Activated CD4-positive, alpha-beta memory T cell treated with anti-CD3 and anti-CD28 coated beads for 36 hours (primary cell): ENCODE measurements at regions of chr10 and their contacts with region 1.

Region 1: GRCh38 chr10:101782811-101783735 is at the start of gene NPM3:
- DNase-seq: peak; percentile 92
- H3K4me3 Mint-ChIP-seq: peak within 1 kb of the TSS; percentile 98
- H3K27ac Mint-ChIP-seq: peak within 1 kb of the TSS; percentile 83
- H3K4me1 Mint-ChIP-seq: peaks cover 67% of the 10 kb centered on the region
- H3K27me3 Mint-ChIP-seq: peaks cover 10% of the 10 kb centered on the region
- total RNA-seq, gene NPM3: 168 to 172 TPM

Region 2: GRCh38 chr10:101228153-101228973 is 554.7 kb before region 1 on chr10:
- CTCF ChIA-PET with region 1: no interaction called
- POLR2A ChIA-PET with region 1: no interaction called
- intact Hi-C with region 1: loop called (anchors 5 kb)
- DNase-seq: no peak
- H3K4me3 Mint-ChIP-seq: peak overlapping the region; percentile 3
- H3K27ac Mint-ChIP-seq: no peak overlapping the region
- H3K4me1 Mint-ChIP-seq: peaks cover 35% of the 10 kb centered on the region
- H3K27me3 Mint-ChIP-seq: peaks cover 68% of the 10 kb centered on the region

Region 3: DNA sequence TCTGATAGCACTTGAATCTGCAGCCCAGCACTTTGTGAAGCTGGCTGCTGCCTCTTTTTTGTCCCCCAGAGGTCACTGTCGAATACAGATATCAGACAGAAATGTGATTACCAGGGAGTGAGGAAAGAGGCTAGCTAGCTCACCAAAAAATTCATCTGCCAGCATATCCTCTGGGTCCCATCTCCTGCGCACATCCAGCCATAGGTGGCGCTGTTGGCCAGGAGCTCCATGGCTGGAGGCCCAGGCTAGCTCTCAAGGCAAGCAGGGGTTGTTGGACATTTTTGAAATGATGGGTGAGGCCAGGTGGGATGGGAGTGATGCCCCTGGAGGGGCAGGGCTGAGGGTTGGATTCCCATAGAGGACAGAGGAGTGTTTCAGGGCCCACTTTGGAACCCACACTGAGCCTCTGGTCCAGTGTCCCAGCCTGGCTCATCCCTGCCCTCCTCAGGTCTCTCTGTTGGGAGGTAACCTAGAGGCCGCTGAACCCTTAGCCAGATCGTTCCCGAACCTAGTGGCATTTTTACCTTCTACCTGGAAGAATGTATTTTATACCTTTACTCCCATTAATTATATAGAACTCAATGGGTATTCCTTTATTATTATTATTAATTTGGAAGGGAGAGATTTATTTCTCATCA is 180.2 kb before region 1 on chr10:
- CTCF ChIA-PET with region 1: interaction called, 197 read pairs
- POLR2A ChIA-PET with region 1: interaction called, 6 read pairs
- intact Hi-C with region 1: loop called (anchors 1 kb)
- DNase-seq: peak; percentile 86
- H3K4me3 Mint-ChIP-seq: no peak overlapping the region
- H3K27ac Mint-ChIP-seq: no peak overlapping the region
- H3K4me1 Mint-ChIP-seq: no peaks in the 10 kb centered on the region
- H3K27me3 Mint-ChIP-seq: no peaks in the 10 kb centered on the region

Region 4: DNA sequence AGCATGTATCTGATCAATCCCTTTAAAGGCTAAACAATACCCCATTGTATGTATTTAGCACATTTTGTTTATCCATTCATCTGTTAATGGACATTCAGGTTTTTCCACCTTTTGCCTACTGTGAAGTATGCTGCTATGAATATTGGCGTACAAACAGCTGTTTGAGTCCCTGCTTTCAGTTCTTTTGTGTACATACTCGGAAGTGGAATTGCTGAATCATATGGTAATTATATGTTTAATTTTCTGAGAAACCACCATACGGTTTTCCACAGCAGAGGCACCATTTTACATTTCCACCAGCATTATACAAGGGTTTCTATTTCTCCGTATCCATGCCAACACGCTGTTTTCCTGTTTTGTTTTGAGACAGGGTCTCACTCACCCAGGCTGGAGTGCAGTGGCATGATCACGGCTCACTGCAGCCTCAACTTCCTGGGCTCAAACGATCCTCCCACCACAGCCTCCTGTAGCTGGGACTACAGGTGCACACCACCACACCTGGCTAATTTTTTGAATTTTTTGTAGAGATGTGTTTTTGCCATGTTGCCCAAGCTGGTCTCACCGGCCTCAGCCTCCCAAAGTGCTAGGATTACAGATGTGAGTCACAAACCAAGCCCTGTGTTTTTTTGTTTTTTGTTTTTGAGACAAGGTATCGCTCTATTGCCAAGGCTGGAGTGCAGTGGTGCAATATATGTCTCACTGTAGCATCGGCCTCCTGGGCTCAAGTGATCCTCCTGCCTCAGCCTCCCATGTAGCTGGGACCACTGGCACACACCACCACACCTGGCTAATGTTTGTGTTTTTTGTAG is 66.0 kb before region 1 on chr10:
- CTCF ChIA-PET with region 1: no interaction called
- POLR2A ChIA-PET with region 1: no interaction called
- intact Hi-C with region 1: loop called (anchors 5 kb)
- DNase-seq: peak; percentile 67
- H3K4me3 Mint-ChIP-seq: no peak overlapping the region
- H3K27ac Mint-ChIP-seq: peak overlapping the region; percentile 72
- H3K4me1 Mint-ChIP-seq: peaks cover 10% of the 10 kb centered on the region
- H3K27me3 Mint-ChIP-seq: no peaks in the 10 kb centered on the region

Region 5: DNA sequence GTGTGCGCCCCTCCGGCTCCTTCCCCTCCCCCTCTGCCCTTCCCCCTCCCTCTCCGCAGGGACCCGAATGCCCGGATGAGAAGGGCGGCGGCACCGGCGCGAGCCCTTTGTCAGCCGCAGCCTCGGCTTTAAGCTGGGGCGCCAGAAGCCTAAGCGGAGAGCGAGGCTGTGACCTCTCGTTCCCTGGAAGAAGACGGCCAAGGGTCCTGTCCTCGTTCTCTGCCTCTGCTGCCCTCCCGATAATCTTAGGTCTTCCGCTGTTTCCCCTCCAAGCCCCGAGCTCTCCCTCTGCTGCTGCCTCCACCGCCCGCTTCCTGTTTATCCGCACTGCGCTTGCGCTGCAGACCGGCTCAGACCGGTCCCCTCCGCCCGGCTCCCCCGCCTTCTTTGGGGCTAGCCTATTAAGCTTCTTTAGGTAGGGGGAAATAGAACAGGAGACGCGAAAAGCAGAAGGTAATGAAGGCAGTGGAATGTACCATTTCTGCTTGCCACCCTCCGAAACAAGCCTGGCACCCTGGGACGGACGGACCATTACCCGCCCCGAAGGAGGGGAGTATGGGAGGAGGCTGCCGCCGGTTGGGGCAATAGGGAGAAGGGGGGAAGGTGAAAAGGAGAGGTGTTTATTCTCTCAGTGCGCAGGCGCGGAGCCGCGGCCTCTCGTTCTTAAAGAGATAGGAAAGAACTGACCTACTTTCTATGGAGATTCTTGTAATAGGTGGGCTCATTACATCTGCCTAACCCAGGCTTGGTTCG is 35.2 kb after region 1 on chr10 and contains the start of gene OGA:
- CTCF ChIA-PET with region 1: interaction called, 15 read pairs
- POLR2A ChIA-PET with region 1: interaction called, 18 read pairs
- intact Hi-C with region 1: loop called (anchors 2 kb)
- DNase-seq: peak; percentile 99
- H3K4me3 Mint-ChIP-seq: peak within 1 kb of the TSS; percentile 97
- H3K27ac Mint-ChIP-seq: peak within 1 kb of the TSS; percentile 97
- H3K4me1 Mint-ChIP-seq: peaks cover 39% of the 10 kb centered on the region
- H3K27me3 Mint-ChIP-seq: no peaks in the 10 kb centered on the region
- total RNA-seq, gene OGA: 93.2 to 105 TPM